ENCODE measurements at regions of chr13 and their contacts with region 1.

Region 1: DNA sequence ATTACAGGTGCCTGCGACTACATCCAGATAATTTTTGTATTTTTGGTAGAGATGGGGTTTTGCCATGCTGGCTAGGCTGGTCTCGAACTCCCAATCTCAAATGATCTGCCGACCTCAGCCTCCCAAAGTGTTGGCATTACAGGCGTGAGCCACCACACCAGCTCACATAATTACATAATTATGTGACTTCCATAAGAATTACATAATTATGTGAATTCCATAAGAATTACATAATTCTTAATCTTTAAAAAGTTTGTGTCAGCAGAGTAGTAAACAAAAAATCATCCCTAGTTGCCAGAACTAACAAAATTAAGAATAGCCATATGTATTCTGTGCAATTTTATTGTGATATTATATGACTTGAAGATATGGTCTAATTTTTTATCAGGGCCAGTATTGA is 25.6 kb downstream of the IFT88 start:
- DNase-seq: no peak
- ATAC-seq: no peak
- H3K4me3 ChIP-seq: no peak overlapping the region
- H3K27ac ChIP-seq: no peak overlapping the region
- H3K4me1 ChIP-seq: no peaks in the 10 kb centered on the region; the same call in 1 of the 2 replicates
- H3K27me3 ChIP-seq: no peaks in the 10 kb centered on the region
- CTCF ChIP-seq: no peak

Region 2: DNA sequence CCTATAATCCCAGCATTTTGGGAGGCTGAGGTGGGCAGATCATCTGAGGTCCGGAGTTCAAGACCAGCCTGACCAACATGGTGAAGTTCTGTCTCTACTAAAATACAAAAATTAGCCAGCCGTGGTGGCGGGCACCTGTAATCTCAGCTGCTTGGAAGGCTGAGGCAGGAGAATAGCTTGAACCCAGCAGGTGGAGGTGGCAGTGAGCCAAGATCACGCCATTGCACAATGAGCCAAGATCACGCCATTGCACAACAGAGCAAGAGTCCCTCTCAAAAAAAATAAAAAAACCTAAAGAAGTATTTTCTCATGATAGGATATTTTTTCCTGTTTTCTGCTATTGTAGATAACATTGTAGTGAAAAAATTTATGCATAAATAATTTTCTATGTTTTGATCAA is 12.3 kb before region 1 on chr13:
- CTCF ChIA-PET with region 1: no interaction called
- POLR2A ChIA-PET with region 1: interaction called, 20 read pairs
- in situ Hi-C with region 1: no loop called
- intact Hi-C with region 1: no loop called
- DNase-seq: no peak
- ATAC-seq: no peak
- H3K4me3 ChIP-seq: no peak overlapping the region
- H3K27ac ChIP-seq: no peak overlapping the region
- H3K4me1 ChIP-seq: no peaks in the 10 kb centered on the region
- H3K27me3 ChIP-seq: no peaks in the 10 kb centered on the region
- CTCF ChIP-seq: no peak

Measured in Panc1 (cell line).